Heart left ventricle (tissue), 16 donors: ENCODE measurements at regions of chr13 and their contacts with region 1.

Region 1: GRCh38 chr13:102724923-102725322 is 30.1 kb upstream of the METTL21C start:
- DNase-seq: no peak
- ATAC-seq: peak in 3 of 4 donors; percentile 42 to 72 (median 49)
- H3K4me3 ChIP-seq: no peak overlapping the region
- H3K27ac ChIP-seq: no peak overlapping the region
- H3K4me1 ChIP-seq: peaks cover 0 to 5% (median 0%) of the 10 kb centered on the region in 12 donors
- H3K27me3 ChIP-seq: no peaks in the 10 kb centered on the region
- CTCF ChIP-seq: peak in 8 of 12 donors; percentile 5 to 42 (median 26)
- POLR2A ChIP-seq: no peak

Region 2: GRCh38 chr13:102589301-102589822 is 135.6 kb before region 1 on chr13:
- intact Hi-C with region 1: loop called in 4 of 10 experiments (anchors 5 kb)
- DNase-seq: no peak
- ATAC-seq: no peak
- H3K4me3 ChIP-seq: no peak overlapping the region
- H3K27ac ChIP-seq: no peak overlapping the region
- H3K4me1 ChIP-seq: peaks cover 0 to 25% (median 7%) of the 10 kb centered on the region in 12 donors
- H3K27me3 ChIP-seq: peaks cover 0 to 10% (median 0%) of the 10 kb centered on the region in 9 donors
- CTCF ChIP-seq: no peak
- POLR2A ChIP-seq: no peak